GM18951 (cell line): ENCODE measurements at regions of chr13 and their contacts with region 1.

Region 1: GRCh38 chr13:22801402-22802003 is 379.3 kb upstream of the SGCG start:
- POLR2A ChIP-seq: no peak

Region 2: GRCh38 chr13:23020223-23020843 is 218.8 kb after region 1 on chr13:
- in situ Hi-C with region 1: loop called (anchors 25 kb)
- POLR2A ChIP-seq: no peak

Region 3: DNA sequence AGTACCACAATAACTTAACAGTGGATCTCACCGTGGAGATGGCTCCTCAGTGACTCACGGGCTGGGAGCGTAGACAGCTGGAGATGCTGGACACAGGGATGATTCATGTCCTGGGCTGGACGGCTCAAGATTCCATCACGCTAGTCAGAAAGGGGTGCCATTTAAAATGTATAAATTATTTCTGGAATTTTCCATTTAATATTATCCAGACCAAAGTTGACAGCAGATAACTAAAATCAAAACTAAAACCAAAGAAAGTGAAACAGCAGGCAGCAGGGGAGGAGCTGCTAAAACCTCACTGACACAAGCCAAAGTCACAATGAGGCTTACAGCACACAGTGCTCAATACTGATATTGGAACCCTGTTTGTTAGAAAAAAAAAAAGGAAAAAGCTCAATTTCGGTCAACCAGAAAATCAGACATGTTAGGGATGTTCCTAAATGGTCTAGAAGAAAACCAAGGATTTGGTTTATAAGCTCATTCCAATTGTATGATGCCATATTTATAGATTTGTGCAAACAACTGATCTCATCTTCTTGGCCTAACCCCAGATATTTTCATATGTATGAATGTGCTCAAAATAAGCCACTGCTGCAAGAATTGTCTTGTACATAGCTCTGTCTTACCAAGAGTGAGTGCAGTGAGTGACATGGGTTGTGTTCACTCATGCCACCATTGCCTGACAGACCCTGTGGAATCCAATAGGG is 520.2 kb after region 1 on chr13:
- in situ Hi-C with region 1: loop called (anchors 25 kb)
- POLR2A ChIP-seq: no peak